ENCODE measurements at regions of chr11 and their contacts with region 1.

Region 1: GRCh38 chr11:31107062-31107461 is 262.5 kb downstream of the DCDC1 start:
- DNase-seq: no peak
- ATAC-seq: peak; percentile 98
- H3K4me3 ChIP-seq: no peak overlapping the region
- H3K27ac ChIP-seq: no peak overlapping the region
- H3K4me1 ChIP-seq: no peaks in the 10 kb centered on the region
- H3K27me3 ChIP-seq: no peaks in the 10 kb centered on the region
- CTCF ChIP-seq: peak; percentile 64 to 78 (median 77)
- EP300 ChIP-seq: no peak
- POLR2A ChIP-seq: no peak
- RAD21 ChIP-seq: peak; percentile 86

Region 2: GRCh38 chr11:31096191-31096805 is 10.8 kb before region 1 on chr11:
- CTCF ChIA-PET with region 1: interaction called, 23 read pairs
- POLR2A ChIA-PET with region 1: no interaction called
- RAD21 ChIA-PET with region 1: interaction called, 3 read pairs
- SMC1A ChIA-PET with region 1: interaction called, 9 read pairs
- in situ Hi-C with region 1: no loop called
- intact Hi-C with region 1: no loop called
- DNase-seq: no peak
- ATAC-seq: peak; percentile 31
- H3K4me3 ChIP-seq: no peak overlapping the region
- H3K27ac ChIP-seq: no peak overlapping the region
- H3K4me1 ChIP-seq: no peaks in the 10 kb centered on the region
- H3K27me3 ChIP-seq: no peaks in the 10 kb centered on the region
- CTCF ChIP-seq: no peak
- EP300 ChIP-seq: no peak
- POLR2A ChIP-seq: no peak
- RAD21 ChIP-seq: no peak

Region 3: DNA sequence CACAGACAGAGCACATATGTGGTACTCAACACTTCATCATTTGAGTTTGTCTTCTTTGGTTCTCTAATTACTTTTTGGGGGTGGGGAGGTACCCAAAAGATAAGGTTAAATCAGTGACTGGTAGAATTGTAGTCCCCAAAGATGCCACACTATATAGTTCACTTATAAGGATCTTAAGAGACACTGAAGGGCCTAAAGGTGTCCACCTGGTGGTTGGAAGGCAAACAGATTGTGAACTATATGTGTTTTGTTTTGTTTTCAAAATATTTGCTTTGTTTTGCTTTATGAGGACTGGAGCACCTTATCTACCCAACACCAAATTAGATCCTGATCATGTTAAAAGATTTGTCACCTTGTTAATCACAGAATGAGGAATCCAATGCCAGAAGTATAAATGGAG is 126.4 kb after region 1 on chr11:
- CTCF ChIA-PET with region 1: interaction called, 32 read pairs
- POLR2A ChIA-PET with region 1: no interaction called
- RAD21 ChIA-PET with region 1: interaction called, 9 read pairs
- SMC1A ChIA-PET with region 1: interaction called, 4 read pairs
- in situ Hi-C with region 1: no loop called
- intact Hi-C with region 1: loop called (anchors 1 kb)
- DNase-seq: no peak
- ATAC-seq: peak; percentile 72
- H3K4me3 ChIP-seq: no peak overlapping the region
- H3K27ac ChIP-seq: no peak overlapping the region
- H3K4me1 ChIP-seq: no peaks in the 10 kb centered on the region
- H3K27me3 ChIP-seq: no peaks in the 10 kb centered on the region
- CTCF ChIP-seq: no peak; a peak in 1 of 6 replicates
- EP300 ChIP-seq: no peak
- POLR2A ChIP-seq: no peak
- RAD21 ChIP-seq: 0 out of 2 replicates have a peak, but pooled peaks have one; percentile 28

Region 4: DNA sequence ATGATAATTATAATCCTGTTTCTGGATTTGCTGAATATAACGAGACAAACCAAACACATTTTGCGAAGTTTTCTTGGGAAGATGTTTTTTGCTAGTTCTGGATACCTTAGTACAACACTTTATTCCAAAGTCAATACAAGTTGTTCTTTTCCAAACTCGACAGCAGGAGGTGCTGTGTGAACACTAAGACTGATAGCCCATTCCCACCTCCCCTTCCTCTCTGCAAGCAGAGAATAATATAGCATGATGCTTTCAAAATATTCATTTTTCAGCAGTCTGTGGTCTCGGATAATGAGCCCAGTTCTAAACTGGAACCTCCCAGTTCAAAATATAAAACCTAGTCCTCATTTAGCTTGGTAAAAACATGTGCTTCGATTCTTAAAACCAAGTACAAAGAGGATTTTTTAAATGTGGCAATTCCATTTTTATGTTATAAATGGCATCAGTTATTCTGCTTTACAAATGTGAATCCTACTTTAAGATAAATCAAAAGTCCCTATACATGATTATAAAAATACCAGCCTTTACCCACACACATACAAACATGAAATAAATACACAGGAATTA is 133.4 kb after region 1 on chr11:
- CTCF ChIA-PET with region 1: interaction called, 14 read pairs
- POLR2A ChIA-PET with region 1: no interaction called
- RAD21 ChIA-PET with region 1: interaction called, 8 read pairs
- SMC1A ChIA-PET with region 1: interaction called, 4 read pairs
- in situ Hi-C with region 1: no loop called
- intact Hi-C with region 1: no loop called
- DNase-seq: no peak
- ATAC-seq: peak; percentile 68
- H3K4me3 ChIP-seq: no peak overlapping the region
- H3K27ac ChIP-seq: no peak overlapping the region
- H3K4me1 ChIP-seq: no peaks in the 10 kb centered on the region
- H3K27me3 ChIP-seq: no peaks in the 10 kb centered on the region
- CTCF ChIP-seq: peak; percentile 50 to 54 (median 54)
- EP300 ChIP-seq: no peak
- POLR2A ChIP-seq: no peak
- RAD21 ChIP-seq: peak; percentile 61

Region 5: GRCh38 chr11:31262761-31263160 is 155.7 kb after region 1 on chr11:
- CTCF ChIA-PET with region 1: no interaction called
- POLR2A ChIA-PET with region 1: no interaction called
- RAD21 ChIA-PET with region 1: no interaction called
- SMC1A ChIA-PET with region 1: no interaction called
- in situ Hi-C with region 1: no loop called
- intact Hi-C with region 1: no loop called
- DNase-seq: no peak
- ATAC-seq: no peak
- H3K4me3 ChIP-seq: no peak overlapping the region
- H3K27ac ChIP-seq: no peak overlapping the region
- H3K4me1 ChIP-seq: no peaks in the 10 kb centered on the region
- H3K27me3 ChIP-seq: no peaks in the 10 kb centered on the region
- CTCF ChIP-seq: no peak
- EP300 ChIP-seq: no peak
- POLR2A ChIP-seq: no peak
- RAD21 ChIP-seq: no peak

Region 6: GRCh38 chr11:32006799-32007388 is 899.8 kb after region 1 on chr11:
- CTCF ChIA-PET with region 1: interaction called, 12 read pairs
- POLR2A ChIA-PET with region 1: no interaction called
- RAD21 ChIA-PET with region 1: interaction called, 4 read pairs
- SMC1A ChIA-PET with region 1: interaction called, 5 read pairs
- in situ Hi-C with region 1: no loop called
- intact Hi-C with region 1: no loop called
- DNase-seq: peak; percentile 11
- ATAC-seq: peak; percentile 87
- H3K4me3 ChIP-seq: no peak overlapping the region
- H3K27ac ChIP-seq: no peak overlapping the region
- H3K4me1 ChIP-seq: no peaks in the 10 kb centered on the region
- H3K27me3 ChIP-seq: no peaks in the 10 kb centered on the region
- CTCF ChIP-seq: peak; percentile 68 to 75 (median 72); a peak in 5 of 6 replicates
- EP300 ChIP-seq: no peak
- POLR2A ChIP-seq: no peak
- RAD21 ChIP-seq: peak; percentile 68

Region 7: GRCh38 chr11:32297611-32298011 is 1190.5 kb after region 1 on chr11:
- CTCF ChIA-PET with region 1: interaction called, 11 read pairs
- POLR2A ChIA-PET with region 1: no interaction called
- RAD21 ChIA-PET with region 1: interaction called, 4 read pairs
- SMC1A ChIA-PET with region 1: interaction called, 5 read pairs
- in situ Hi-C with region 1: no loop called
- intact Hi-C with region 1: loop called (anchors 10 kb)
- DNase-seq: no peak
- ATAC-seq: peak; percentile 64
- H3K4me3 ChIP-seq: no peak overlapping the region
- H3K27ac ChIP-seq: no peak overlapping the region
- H3K4me1 ChIP-seq: no peaks in the 10 kb centered on the region
- H3K27me3 ChIP-seq: no peaks in the 10 kb centered on the region; a peak in 2 of 4 replicates
- CTCF ChIP-seq: peak; percentile 5 to 37 (median 26); a peak in 1 of 6 replicates
- EP300 ChIP-seq: no peak
- POLR2A ChIP-seq: no peak
- RAD21 ChIP-seq: peak; percentile 37